ENCODE measurements at regions of chr2 and their contacts with region 1.

Region 1: DNA sequence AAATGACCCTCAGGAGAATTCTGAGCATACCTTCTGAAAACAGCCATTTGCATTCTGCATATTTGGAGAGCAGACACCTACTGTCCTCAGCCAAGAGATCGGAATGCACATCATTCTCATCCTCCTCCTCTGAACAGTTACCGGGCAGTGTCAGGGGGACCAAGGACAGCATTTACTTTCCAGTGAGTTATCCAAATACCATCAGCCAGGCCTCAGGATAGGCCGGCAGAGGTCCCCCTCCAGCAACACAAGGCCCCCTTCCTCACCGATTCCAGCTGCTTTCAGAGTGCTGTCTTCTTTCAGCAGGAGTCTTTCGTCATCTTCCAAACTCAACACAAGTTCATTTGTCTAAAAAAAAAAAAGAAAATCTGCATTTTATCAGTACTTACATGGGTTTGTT is 55.3 kb downstream of the C2orf76 start:
- DNase-seq: no peak
- H3K4me3 ChIP-seq: no peak overlapping the region
- H3K27ac ChIP-seq: no peak overlapping the region
- H3K4me1 ChIP-seq: no peaks in the 10 kb centered on the region
- H3K27me3 ChIP-seq: no peaks in the 10 kb centered on the region
- CTCF ChIP-seq: no peak

Region 2: GRCh38 chr2:119366649-119367471 is 55.5 kb after region 1 on chr2 and contains the starts of genes C2orf76 and DBI:
- intact Hi-C with region 1: loop called (anchors 10 kb)
- DNase-seq: peak; percentile 97
- H3K4me3 ChIP-seq: peak within 1 kb of the TSS; percentile 72
- H3K27ac ChIP-seq: peak within 1 kb of the TSS; percentile 95
- H3K4me1 ChIP-seq: no peaks in the 10 kb centered on the region
- H3K27me3 ChIP-seq: no peaks in the 10 kb centered on the region
- CTCF ChIP-seq: no peak
- total RNA-seq, gene C2orf76: 4.7 to 6.6 TPM
- total RNA-seq, gene DBI: 275 to 291 TPM

Measured in colonic mucosa (tissue), 4 donors.